Vagina (tissue), 2 donors: ENCODE measurements at regions of chr14 and their contacts with region 1.

Region 1: DNA sequence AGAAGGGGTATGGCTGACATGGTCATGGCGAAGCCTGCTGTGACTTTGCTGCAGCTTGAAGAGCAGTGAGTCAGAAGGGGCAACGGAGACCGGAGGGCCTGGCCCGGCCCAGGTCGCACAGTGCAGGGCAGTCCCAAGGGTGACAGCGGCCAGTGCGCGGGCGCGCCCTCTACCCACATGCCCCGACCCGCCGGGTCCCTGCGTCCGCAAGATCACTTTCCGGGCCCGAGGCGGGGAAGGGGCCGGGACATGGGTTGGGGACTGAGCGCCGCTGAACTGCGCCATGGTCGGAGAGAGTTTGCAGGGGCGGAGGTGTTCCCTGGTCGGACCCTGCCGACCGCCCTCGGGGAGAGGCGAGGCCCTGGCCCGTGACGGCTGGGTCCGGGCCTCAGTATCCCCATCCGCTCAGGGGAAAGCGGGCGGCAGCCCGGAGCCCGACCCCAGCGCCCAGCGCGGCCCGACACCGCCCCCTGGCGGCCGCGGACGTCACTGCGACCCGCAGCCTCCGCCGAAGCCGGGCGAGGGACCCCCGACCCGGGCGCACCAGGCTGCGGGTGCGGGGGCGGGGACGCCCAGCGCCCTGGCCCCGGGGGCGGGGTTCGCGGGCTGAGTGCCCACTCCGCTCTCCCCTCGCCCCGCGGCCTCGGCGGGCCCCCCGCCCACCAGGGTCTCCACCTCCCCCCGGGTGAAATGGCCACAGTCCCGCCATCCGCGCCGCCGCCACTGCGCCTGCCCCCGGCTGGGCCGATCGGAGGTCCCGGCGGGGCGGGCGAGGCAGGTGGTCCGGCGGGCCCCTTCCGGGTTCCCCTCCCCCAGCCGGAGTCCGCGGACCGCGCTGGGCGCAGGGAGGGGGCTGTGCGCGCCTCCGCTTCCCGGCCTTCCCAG is 7.2 kb upstream of the ANKRD9 start:
- DNase-seq: no peak
- H3K4me3 ChIP-seq: peak overlapping the region; percentile 58 to 75
- H3K27ac ChIP-seq: peak overlapping the region; percentile 77
- H3K4me1 ChIP-seq: peaks cover 12% of the 10 kb centered on the region
- H3K27me3 ChIP-seq: no peaks in the 10 kb centered on the region
- CTCF ChIP-seq: peak; percentile 61 to 92 (median 87)
- POLR2A ChIP-seq: no peak

Region 2: DNA sequence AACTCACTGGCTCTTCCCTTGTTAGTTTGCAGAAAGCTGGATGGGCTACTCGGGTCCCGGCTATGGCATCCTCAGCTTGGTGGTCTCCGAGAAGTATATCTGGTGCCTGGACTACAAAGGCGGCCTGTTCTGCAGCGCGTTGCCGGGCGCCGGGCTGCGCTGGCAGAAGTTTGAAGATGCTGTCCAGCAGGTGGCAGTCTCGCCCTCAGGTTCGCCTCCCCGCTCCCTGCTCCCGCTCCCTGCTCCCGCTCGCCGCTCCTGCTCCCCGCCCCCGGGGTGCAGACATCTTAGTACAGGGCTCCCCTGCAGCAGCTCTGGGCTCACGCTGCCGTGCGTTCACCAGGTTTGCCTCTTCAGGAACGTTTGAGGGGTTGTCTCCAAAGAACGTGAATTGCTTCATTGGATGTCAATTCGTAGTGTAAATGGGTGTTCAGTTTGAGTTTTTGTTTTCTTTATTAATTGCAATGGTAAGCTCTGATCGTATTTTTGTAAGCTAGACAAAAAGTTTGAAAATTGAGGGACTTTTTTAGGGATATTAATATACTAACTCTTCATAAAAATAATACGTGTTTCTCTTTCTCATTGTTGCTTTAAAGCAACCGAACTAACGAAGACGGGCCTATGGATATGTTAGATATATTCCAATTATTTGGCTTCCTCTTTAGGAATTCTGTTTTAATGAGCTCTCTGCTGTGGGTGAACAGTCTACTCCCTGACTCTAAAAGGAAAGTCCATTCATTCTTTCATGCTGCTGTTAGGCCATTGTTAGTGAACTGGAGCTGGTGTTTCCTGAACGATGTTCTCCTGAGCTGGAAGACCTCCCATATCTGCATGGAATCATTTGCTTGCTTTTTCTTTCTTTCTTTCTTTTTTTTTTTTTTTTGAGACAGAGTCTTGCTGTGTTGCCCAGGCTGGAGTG is 78.5 kb before region 1 on chr14:
- intact Hi-C with region 1: loop called (anchors 2 kb)
- DNase-seq: no peak
- H3K4me3 ChIP-seq: peak overlapping the region; percentile 3 to 29
- H3K27ac ChIP-seq: no peak overlapping the region
- H3K4me1 ChIP-seq: peaks cover 9% of the 10 kb centered on the region
- H3K27me3 ChIP-seq: no peaks in the 10 kb centered on the region
- CTCF ChIP-seq: peak; percentile 60 to 90 (median 62)
- POLR2A ChIP-seq: no peak